HEK293 (cell line): ENCODE measurements at regions of chr20 and their contacts with region 1.

Region 1: DNA sequence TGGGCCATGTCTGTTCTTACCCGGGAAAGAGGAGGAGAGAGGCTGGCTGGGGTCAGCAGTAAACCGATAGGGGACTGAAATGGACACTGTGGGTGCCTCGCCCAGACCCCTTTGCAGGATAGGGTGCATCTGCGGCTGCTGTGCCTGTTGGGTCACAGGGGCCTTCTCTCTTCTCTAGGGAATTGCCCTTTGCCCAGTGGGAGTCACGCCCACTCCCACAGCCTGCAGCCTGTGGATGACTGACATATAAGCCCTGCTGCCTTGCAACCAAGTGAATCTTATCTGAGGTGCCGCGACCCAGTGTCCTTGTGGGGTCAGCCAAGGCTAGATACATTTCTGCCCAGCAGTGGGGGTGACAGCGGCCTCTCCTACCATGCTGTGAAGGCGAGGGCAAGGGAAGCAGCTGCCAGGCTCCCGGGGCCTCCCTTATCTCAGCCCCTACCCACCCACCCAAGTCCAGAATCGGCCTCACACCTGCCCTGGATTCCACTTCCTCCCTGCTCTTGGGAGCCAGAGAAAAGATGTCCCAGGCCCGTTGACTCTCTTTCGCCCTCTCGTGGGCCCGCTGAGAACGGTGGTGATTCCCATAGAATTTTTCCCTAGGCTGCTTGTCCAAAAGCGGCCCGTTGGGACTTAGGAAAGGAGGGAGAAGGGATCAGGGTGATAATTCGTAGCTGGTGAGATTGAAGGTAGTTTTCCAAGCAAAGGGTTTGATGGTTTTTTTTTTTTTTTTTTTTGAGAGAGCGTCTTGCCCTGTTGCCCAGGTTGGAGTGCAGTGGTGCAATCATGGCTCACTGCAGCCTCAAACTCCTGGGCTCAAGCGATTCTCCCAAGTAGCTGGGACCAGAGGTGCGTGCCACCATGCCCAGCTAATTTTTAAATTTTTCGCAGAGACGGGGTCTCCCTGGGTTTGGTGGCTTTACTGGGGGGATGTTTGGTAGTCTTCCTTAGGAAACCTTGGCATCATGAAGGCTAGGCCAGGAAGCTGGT is 76.4 kb upstream of the RNF24 start:
- H3K4me3 ChIP-seq: no peak overlapping the region
- H3K27ac ChIP-seq: no peak overlapping the region
- H3K4me1 ChIP-seq: no peaks in the 10 kb centered on the region
- CTCF ChIP-seq: no peak

Region 2: DNA sequence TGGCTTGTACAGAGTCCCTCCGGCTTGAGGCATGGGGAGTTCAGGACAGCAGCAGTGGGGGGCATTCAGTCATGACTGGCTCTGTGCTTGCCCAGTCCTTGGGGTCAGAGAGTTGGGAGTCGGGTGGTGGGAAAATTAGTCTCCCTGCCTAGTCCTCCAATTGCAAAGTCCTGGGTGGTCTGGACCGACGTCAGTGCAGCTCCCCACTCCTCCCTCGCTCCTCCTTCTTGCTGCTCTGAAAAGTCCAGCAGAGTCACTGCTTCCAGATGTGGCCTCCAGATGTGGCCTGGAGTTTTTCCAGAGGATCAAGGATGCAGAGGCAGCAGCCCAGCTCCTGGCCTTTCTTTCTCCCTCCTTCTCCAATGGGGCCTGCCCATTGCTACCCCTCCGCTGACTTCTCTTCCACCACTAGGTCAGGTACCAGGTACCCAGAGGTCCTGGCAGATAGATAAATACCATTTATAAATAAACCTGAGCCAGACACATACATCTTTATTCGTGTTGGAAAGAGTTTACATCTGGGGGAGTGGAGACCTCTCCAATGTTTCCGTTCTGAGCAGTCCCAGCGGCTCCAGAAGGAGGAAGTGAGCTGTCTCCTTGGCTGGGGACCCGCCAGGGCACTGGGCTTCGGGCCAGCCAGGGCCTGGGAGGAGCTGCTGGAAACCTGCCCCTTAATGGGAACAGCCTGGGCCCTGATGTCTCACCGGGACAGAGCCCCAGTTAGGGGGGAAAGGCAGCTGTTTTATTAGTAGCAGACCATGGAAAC is 27.5 kb before region 1 on chr20:
- CTCF ChIA-PET with region 1: no interaction called
- POLR2A ChIA-PET with region 1: no interaction called
- H3K4me3 ChIP-seq: no peak overlapping the region
- H3K27ac ChIP-seq: 0 out of 2 replicates have a peak overlapping the region, but pooled peaks have one; percentile 5
- H3K4me1 ChIP-seq: peaks cover 4% of the 10 kb centered on the region
- CTCF ChIP-seq: no peak

Region 3: GRCh38 chr20:4102381-4102780 is 10.6 kb after region 1 on chr20:
- CTCF ChIA-PET with region 1: interaction called, 17 read pairs
- POLR2A ChIA-PET with region 1: no interaction called
- H3K4me3 ChIP-seq: no peak overlapping the region
- H3K27ac ChIP-seq: no peak overlapping the region
- H3K4me1 ChIP-seq: no peaks in the 10 kb centered on the region
- CTCF ChIP-seq: no peak

Region 4: DNA sequence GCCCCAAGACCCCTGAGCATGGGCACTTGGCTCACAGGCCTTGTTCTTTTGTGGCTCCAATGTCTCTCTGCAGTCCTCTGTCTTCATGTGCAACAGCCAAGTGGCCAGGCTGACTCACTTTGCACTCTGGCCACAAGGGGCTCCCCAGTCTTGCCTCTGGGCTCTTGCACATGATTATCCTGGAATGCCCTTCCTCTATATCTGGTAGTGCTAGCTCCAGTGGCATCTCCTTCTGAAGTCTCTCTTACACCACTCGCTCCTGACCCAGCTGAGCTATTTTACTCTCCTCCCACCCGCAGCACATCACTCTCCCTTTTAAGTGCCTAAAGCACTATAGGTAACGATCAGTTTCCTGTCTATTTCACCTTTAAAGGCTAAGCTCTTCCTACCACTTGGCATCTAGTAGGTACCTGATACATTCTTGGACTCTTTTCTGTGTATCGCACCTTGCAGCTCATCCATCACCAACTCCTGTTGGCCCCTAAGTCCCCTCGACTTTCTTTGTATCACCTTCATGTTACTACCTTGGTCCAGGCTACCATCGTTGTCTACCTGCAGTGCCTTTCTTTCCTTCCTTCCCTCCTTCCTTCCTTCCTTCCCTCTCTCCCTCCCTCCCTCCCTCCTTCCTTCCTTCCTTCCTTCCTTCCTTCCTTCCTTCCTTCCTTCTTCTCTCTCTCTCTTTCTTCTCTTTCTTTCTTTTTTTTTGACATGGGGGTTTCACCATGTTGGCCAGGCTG is 135.5 kb after region 1 on chr20:
- CTCF ChIA-PET with region 1: no interaction called
- POLR2A ChIA-PET with region 1: no interaction called
- H3K4me3 ChIP-seq: no peak overlapping the region
- H3K27ac ChIP-seq: no peak overlapping the region
- H3K4me1 ChIP-seq: peaks cover 2% of the 10 kb centered on the region
- CTCF ChIP-seq: no peak

Region 5: GRCh38 chr20:4256874-4257273 is 165.1 kb after region 1 on chr20:
- CTCF ChIA-PET with region 1: no interaction called
- POLR2A ChIA-PET with region 1: no interaction called
- H3K4me3 ChIP-seq: no peak overlapping the region
- H3K27ac ChIP-seq: no peak overlapping the region
- H3K4me1 ChIP-seq: no peaks in the 10 kb centered on the region
- CTCF ChIP-seq: no peak